Ascending aorta (tissue), 2 donors: ENCODE measurements at regions of chr2 and their contacts with region 1.

Region 1: GRCh38 chr2:64228126-64228678 is 84.0 kb upstream of the PELI1 start:
- DNase-seq: peak; percentile 30 to 87
- H3K4me3 ChIP-seq: peak overlapping the region; percentile 54 to 64
- H3K27ac ChIP-seq: peak overlapping the region; percentile 22 to 35
- H3K4me1 ChIP-seq: peaks cover 0 to 7% of the 10 kb centered on the region in 2 donors
- H3K27me3 ChIP-seq: no peaks in the 10 kb centered on the region
- CTCF ChIP-seq: no peak

Region 2: GRCh38 chr2:63124208-63124607 is 1104.0 kb before region 1 on chr2:
- intact Hi-C with region 1: no loop called
- DNase-seq: no peak
- H3K4me3 ChIP-seq: no peak overlapping the region
- H3K27ac ChIP-seq: no peak overlapping the region
- H3K4me1 ChIP-seq: no peaks in the 10 kb centered on the region
- H3K27me3 ChIP-seq: no peaks in the 10 kb centered on the region
- CTCF ChIP-seq: no peak

Region 3: GRCh38 chr2:63408530-63408929 is 819.7 kb before region 1 on chr2:
- intact Hi-C with region 1: no loop called
- DNase-seq: no peak
- H3K4me3 ChIP-seq: no peak overlapping the region
- H3K27ac ChIP-seq: no peak overlapping the region
- H3K4me1 ChIP-seq: no peaks in the 10 kb centered on the region
- H3K27me3 ChIP-seq: no peaks in the 10 kb centered on the region
- CTCF ChIP-seq: no peak

Region 4: GRCh38 chr2:64311948-64312621 is 83.9 kb after region 1 on chr2:
- intact Hi-C with region 1: loop called (anchors 5 kb)
- DNase-seq: peak in 1 of 2 donors; percentile 90
- H3K4me3 ChIP-seq: peak overlapping the region in 1 of 2 donors; percentile 54
- H3K27ac ChIP-seq: peak overlapping the region; percentile 42 to 74
- H3K4me1 ChIP-seq: peaks cover 4 to 7% of the 10 kb centered on the region in 2 donors
- H3K27me3 ChIP-seq: no peaks in the 10 kb centered on the region
- CTCF ChIP-seq: peak; percentile 37 to 61 (median 42)

Region 5: DNA sequence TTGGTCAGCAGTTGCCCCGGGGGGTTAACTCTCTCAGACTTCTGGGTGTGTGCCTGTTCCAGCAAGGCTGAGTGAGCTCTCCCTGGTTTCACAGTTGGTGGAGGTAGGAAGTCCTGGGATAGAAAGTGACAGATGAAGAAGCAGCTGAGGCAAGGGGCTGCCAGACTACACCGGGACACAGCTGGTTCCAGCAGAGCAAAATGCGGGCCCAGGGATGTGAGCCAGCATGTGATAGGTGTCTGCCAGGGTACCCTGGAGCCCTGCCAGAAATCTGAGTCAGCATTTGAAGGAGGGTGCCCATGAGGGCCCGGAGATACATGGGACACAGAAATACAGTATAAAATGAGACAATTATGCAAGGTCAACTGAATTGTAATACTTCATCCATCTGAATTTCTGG is 146.5 kb after region 1 on chr2:
- intact Hi-C with region 1: no loop called
- DNase-seq: peak in 1 of 2 donors; percentile 59
- H3K4me3 ChIP-seq: no peak overlapping the region
- H3K27ac ChIP-seq: no peak overlapping the region
- H3K4me1 ChIP-seq: no peaks in the 10 kb centered on the region
- H3K27me3 ChIP-seq: no peaks in the 10 kb centered on the region
- CTCF ChIP-seq: no peak